AG04449 (cell line): ENCODE measurements at regions of chr17 and their contacts with region 1.

Region 1: GRCh38 chr17:40139566-40140058 is 725 bp upstream of the CASC3 start:
- DNase-seq: no peak
- H3K4me3 ChIP-seq: peak overlapping the region; percentile 57
- CTCF ChIP-seq: no peak

Region 2: DNA sequence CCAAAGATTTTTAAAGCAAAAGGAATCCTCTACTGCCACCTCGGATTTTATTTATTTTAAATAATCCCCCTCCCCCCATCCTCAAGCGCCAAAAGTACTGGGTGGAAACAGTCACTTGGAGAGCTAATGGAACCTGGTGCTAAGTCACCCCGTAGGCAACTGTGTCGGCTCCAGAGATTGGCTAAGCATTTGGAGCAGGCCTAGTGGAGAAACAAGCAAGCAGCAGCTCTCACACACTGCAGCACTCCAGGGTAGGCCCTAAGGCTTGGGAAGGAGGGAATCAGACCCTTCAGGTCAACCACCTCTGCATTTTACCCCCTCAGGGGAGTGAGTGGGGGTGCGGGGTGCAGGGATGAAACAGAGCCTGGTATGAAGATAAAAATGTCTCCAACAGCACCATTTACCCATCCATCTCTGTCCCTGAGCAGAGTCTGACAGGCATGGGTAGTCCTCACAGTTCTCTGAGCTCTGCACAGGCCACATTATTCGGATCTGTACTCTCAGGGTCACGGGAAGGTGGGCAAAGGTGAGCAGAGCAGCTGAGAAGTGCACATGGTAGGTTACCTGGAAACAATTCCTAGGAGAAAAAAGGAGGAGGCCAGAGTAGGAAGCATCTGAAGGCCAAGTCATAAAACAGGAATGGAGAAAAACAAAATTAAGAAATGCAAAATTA is 886.7 kb before region 1 on chr17:
- CTCF ChIA-PET with region 1: no interaction called
- POLR2A ChIA-PET with region 1: no interaction called
- DNase-seq: no peak
- H3K4me3 ChIP-seq: no peak overlapping the region
- CTCF ChIP-seq: no peak

Region 3: GRCh38 chr17:40121181-40122135 is 18.2 kb before region 1 on chr17 and contains the start of gene MSL1:
- CTCF ChIA-PET with region 1: interaction called, 23 read pairs
- POLR2A ChIA-PET with region 1: interaction called, 12 read pairs
- DNase-seq: no peak
- H3K4me3 ChIP-seq: peak within 1 kb of the TSS; percentile 92
- CTCF ChIP-seq: no peak